Breast epithelium (tissue), 4 donors: ENCODE measurements at regions of chr6 and their contacts with region 1.

Region 1: GRCh38 chr6:139457476-139457875 is 83.0 kb upstream of the CITED2 start:
- DNase-seq: no peak
- H3K4me3 ChIP-seq: no peak overlapping the region
- H3K27ac ChIP-seq: no peak overlapping the region
- H3K4me1 ChIP-seq: no peaks in the 10 kb centered on the region
- H3K27me3 ChIP-seq: no peaks in the 10 kb centered on the region
- CTCF ChIP-seq: no peak
- POLR2A ChIP-seq: no peak

Region 2: GRCh38 chr6:138833816-138834539 is 623.5 kb before region 1 on chr6:
- intact Hi-C with region 1: loop called (anchors 5 kb)
- DNase-seq: no peak
- H3K4me3 ChIP-seq: no peak overlapping the region
- H3K27ac ChIP-seq: no peak overlapping the region
- H3K4me1 ChIP-seq: no peaks in the 10 kb centered on the region
- H3K27me3 ChIP-seq: no peaks in the 10 kb centered on the region
- CTCF ChIP-seq: no peak
- POLR2A ChIP-seq: no peak

Region 3: DNA sequence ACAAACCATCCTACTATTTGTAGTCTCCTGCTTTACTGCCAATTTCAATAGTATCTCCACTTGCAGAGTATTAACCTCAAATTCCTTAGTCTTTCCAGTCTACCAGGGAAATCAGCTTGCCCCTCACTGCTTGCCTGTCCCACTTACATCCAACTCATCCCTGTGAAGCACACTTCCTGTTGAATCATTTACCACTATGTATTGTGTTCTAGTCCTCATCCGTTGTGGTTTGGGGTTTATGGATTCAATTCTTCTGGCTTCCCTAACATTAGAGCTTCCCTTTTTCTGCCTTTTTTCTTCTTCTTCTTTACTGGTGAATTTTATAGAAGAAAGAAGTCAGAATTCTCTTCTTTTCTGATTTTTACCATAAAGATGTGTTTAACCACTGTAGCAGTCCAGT is 160.5 kb before region 1 on chr6:
- intact Hi-C with region 1: no loop called
- DNase-seq: no peak
- H3K4me3 ChIP-seq: no peak overlapping the region
- H3K27ac ChIP-seq: no peak overlapping the region
- H3K4me1 ChIP-seq: no peaks in the 10 kb centered on the region
- H3K27me3 ChIP-seq: no peaks in the 10 kb centered on the region
- CTCF ChIP-seq: no peak
- POLR2A ChIP-seq: no peak

Region 4: GRCh38 chr6:140160909-140161308 is 703.4 kb after region 1 on chr6:
- intact Hi-C with region 1: no loop called
- DNase-seq: no peak
- H3K4me3 ChIP-seq: no peak overlapping the region
- H3K27ac ChIP-seq: no peak overlapping the region
- H3K4me1 ChIP-seq: no peaks in the 10 kb centered on the region
- H3K27me3 ChIP-seq: no peaks in the 10 kb centered on the region
- CTCF ChIP-seq: no peak
- POLR2A ChIP-seq: no peak